Right ventricle myocardium inferior (tissue), 1 donor: ENCODE measurements at regions of chr20 and their contacts with region 1.

Region 1: DNA sequence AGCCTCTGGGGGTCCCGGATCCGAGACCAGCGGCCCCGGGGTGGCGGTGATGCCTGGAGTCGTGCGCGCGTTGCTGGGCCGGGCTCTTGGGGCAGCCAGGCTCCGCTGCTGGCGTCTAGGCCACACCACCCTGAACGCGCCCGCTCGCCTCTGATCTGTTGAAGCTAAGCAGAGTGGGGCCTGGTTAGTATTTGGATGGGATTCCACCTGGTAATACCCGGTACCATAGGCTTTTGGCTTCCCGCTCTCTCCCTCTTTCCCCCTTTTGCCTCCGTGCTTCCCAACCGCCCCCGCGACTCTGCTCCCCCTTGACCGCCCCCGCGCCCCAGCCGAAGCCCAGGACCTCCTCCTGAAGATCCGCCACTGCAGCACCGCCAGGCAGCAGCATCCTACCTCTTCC is 1383.5 kb upstream of the DEFB115 start:
- DNase-seq: peak; percentile 91
- ATAC-seq: no peak

Region 2: DNA sequence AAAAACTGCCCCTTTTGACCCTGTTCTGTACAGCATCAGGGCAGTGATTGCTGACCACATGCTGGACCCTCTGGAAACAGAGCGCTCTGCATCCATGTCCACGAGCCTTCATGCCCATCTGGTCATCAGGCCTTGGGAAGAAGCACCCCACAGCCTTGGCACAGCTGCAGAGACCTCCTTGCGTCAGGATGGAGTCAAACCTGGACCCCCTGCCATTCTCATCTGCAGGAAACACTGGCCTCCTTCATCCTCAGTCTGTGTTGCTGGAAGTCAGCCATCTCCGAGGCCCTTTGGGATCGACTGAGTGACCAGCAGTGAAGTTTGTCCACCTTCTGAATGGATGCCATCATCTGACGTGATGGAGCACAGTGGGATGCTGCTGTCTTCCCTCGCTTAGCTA is 754.8 kb before region 1 on chr20:
- intact Hi-C with region 1: loop called (anchors 10 kb)
- DNase-seq: no peak
- ATAC-seq: peak; percentile 20

Region 3: GRCh38 chr20:29497261-29497671 is 376.7 kb before region 1 on chr20:
- intact Hi-C with region 1: no loop called
- DNase-seq: no peak
- ATAC-seq: no peak

Region 4: DNA sequence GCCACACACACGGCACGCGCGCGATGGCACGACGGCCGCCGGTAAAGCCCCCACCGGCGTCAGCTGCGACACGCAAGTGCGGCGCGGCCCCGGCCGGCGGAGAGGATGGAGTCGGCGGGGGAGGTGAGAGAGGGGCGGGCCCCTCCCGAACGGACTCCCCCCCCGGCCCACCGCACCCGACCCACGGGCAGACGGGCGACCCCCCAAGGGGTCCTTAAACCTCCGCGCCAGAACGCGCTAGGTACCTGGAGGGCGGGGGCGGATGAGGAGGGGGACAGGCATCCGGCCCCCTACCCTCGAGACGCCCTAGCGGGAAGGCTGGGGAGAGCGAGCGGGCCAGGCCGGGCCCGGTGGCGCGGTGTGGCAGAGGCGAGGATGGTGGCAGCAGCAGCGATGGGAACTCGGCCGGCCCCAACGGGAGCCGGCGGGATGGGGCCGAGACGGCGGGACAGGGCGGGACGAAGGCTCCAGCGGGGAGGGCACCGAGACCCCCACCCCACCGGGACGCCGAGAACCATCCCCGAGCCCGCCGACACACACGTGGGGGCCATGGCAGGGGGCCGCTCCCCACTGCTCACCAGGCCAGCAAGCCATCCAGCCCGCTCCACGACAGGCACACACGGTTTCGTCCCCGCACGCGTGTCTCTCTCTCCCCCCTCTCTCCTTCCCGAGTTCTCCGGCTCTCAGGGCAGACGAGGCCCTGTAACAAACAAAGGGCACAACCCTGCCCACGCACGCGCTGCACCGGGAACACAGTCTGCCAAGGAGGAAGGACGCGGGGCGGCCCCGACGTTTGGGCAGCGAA is 131.8 kb before region 1 on chr20:
- intact Hi-C with region 1: no loop called
- DNase-seq: no peak
- ATAC-seq: no peak

Region 5: GRCh38 chr20:29763821-29764511 is 110.0 kb before region 1 on chr20:
- intact Hi-C with region 1: no loop called
- DNase-seq: no peak
- ATAC-seq: no peak

Region 6: GRCh38 chr20:30168025-30168799 is 294.3 kb after region 1 on chr20:
- intact Hi-C with region 1: no loop called
- DNase-seq: peak; percentile 71
- ATAC-seq: no peak